T-cell (primary cell): ENCODE measurements at regions of chr18 and their contacts with region 1.

Region 1: DNA sequence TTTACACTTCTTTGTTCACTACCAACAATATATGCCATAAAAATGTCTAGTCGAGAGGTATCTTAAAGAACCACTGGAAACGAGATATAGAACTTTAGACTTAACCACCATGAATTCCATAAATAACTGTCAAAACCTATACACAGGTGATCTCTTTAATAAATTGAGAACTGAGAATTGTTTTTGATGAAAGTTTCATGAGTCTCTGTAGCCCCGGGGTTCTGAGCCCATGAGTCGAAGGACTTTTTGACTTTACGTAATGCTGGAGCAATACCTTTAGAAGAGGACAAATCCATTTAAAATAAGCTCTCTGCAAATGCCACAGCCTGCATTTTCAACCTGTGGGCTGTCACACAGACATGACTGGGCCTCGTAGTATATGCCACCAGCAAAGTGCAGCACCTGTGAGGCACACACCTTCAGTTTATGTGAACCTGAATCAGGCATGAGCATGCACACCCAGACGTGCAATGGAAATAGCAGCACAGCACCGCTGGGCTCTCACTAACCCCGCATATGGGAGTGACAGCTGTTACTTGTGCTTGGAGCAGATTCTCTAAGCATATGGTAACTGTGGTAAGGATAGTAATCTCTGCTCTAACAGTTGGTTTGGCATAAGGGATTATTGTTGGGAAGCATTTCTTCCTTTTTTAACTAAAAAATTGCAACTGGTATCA is 383.2 kb downstream of the SOCS6 start:
- DNase-seq: peak in 29 of 35 experiments; percentile 5 to 63 (median 23)
- ATAC-seq: peak; percentile 55 to 63 (median 59)
- H3K4me3 ChIP-seq: no peak overlapping the region
- H3K4me3 Mint-ChIP-seq: peak overlapping the region in 1 of 3 donors; percentile 33
- H3K27ac ChIP-seq: peak overlapping the region; percentile 88
- H3K27ac Mint-ChIP-seq: peak overlapping the region; percentile 89 to 95
- H3K4me1 ChIP-seq: peaks cover 24 to 26% of the 10 kb centered on the region in 2 experiments
- H3K4me1 Mint-ChIP-seq: peaks cover 46 to 61% (median 49%) of the 10 kb centered on the region in 3 donors
- H3K27me3 ChIP-seq: no peaks in the 10 kb centered on the region
- H3K27me3 Mint-ChIP-seq: no peaks in the 10 kb centered on the region

Region 2: GRCh38 chr18:70659036-70659925 is 12.7 kb before region 1 on chr18:
- CTCF ChIA-PET with region 1: interaction called, 4 to 11 read pairs
- POLR2A ChIA-PET with region 1: interaction called, 6 to 14 read pairs
- DNase-seq: peak in 34 of 35 experiments; percentile 41 to 92 (median 73)
- ATAC-seq: peak; percentile 92 to 98 (median 93)
- H3K4me3 ChIP-seq: peak overlapping the region in 1 of 2 donors; percentile 23
- H3K4me3 Mint-ChIP-seq: peak overlapping the region; percentile 42 to 64 (median 53)
- H3K27ac ChIP-seq: peak overlapping the region; percentile 58
- H3K27ac Mint-ChIP-seq: peak overlapping the region; percentile 86 to 88
- H3K4me1 ChIP-seq: peaks cover 10 to 15% of the 10 kb centered on the region in 2 experiments
- H3K4me1 Mint-ChIP-seq: peaks cover 52 to 57% (median 54%) of the 10 kb centered on the region in 3 donors
- H3K27me3 ChIP-seq: no peaks in the 10 kb centered on the region
- H3K27me3 Mint-ChIP-seq: no peaks in the 10 kb centered on the region